ENCODE measurements at regions of chr14 and their contacts with region 1.

Region 1: GRCh38 chr14:57486767-57487379 is 6.8 kb downstream of the CCDC198 start:
- DNase-seq: peak; percentile 30
- H3K4me3 ChIP-seq: no peak overlapping the region
- H3K27ac ChIP-seq: no peak overlapping the region
- H3K4me1 ChIP-seq: no peaks in the 10 kb centered on the region
- H3K27me3 ChIP-seq: no peaks in the 10 kb centered on the region
- CTCF ChIP-seq: peak; percentile 49 to 55
- POLR2A ChIP-seq: no peak

Region 2: DNA sequence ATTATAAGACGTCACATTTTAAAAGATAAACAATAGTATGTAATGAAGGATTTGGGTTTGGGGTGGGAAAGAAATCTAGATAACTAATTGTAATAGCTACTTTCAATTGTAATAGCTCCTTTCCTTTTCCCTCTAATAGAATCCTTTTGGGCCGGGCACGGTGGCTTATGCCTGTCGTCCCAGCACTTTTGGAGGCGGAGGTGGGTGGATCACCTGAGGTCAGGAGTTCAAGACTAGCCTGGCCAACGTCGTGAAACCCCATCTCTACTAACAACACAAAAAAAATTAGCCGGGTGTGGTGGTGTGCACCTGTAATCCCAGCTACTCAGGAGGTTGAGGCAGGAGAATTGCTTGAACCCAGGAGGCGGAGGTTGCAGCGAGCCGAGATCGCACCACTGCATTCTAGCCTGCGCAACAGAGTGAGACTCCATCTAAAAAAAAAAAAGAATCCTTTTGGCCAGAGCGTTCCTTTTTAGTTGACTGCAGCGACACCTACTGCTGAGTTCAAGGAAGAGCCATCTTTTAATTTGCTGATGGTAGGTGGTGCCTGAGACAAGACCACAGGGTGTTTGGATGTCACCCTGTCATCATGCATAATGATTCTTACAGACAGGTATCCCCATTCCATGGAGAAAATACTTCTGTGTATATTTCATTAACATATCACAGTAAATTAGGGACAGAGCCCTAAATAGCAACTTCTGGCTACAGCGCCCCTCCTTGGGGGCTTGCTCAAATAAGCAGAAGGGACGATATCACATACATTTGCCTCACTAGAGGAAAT is 585.6 kb after region 1 on chr14:
- CTCF ChIA-PET with region 1: interaction called, 24 read pairs
- POLR2A ChIA-PET with region 1: no interaction called
- dilution Hi-C with region 1: no loop called
- intact Hi-C with region 1: loop called (anchors 1 kb)
- DNase-seq: peak; percentile 68
- H3K4me3 ChIP-seq: no peak overlapping the region
- H3K27ac ChIP-seq: no peak overlapping the region
- H3K4me1 ChIP-seq: no peaks in the 10 kb centered on the region
- H3K27me3 ChIP-seq: peaks cover 8 to 14% of the 10 kb centered on the region in 2 experiments
- CTCF ChIP-seq: peak; percentile 50 to 67
- POLR2A ChIP-seq: no peak

Region 3: GRCh38 chr14:58166005-58166983 is 679.4 kb after region 1 on chr14:
- CTCF ChIA-PET with region 1: no interaction called
- POLR2A ChIA-PET with region 1: no interaction called
- dilution Hi-C with region 1: no loop called
- intact Hi-C with region 1: loop called (anchors 2 kb)
- DNase-seq: peak; percentile 67
- H3K4me3 ChIP-seq: no peak overlapping the region
- H3K27ac ChIP-seq: no peak overlapping the region
- H3K4me1 ChIP-seq: no peaks in the 10 kb centered on the region
- H3K27me3 ChIP-seq: peaks cover 2 to 4% of the 10 kb centered on the region in 2 experiments
- CTCF ChIP-seq: peak; percentile 79 to 92
- POLR2A ChIP-seq: no peak

Measured in endothelial cell of umbilical vein (primary cell).